A673 (cell line): ENCODE measurements at regions of chr1 and their contacts with region 1.

Region 1: GRCh38 chr1:48127735-48128685 is 94.5 kb upstream of the SLC5A9 start:
- DNase-seq: no peak
- H3K4me3 ChIP-seq: no peak overlapping the region
- H3K27ac ChIP-seq: no peak overlapping the region
- H3K4me1 ChIP-seq: no peaks in the 10 kb centered on the region
- H3K27me3 ChIP-seq: peaks cover 14% of the 10 kb centered on the region
- CTCF ChIP-seq: no peak

Region 2: GRCh38 chr1:48187969-48188563 is 60.1 kb after region 1 on chr1:
- CTCF ChIA-PET with region 1: no interaction called
- POLR2A ChIA-PET with region 1: no interaction called
- intact Hi-C with region 1: loop called (anchors 5 kb)
- DNase-seq: no peak
- H3K4me3 ChIP-seq: no peak overlapping the region
- H3K27ac ChIP-seq: no peak overlapping the region
- H3K4me1 ChIP-seq: no peaks in the 10 kb centered on the region
- H3K27me3 ChIP-seq: no peaks in the 10 kb centered on the region
- CTCF ChIP-seq: no peak

Region 3: DNA sequence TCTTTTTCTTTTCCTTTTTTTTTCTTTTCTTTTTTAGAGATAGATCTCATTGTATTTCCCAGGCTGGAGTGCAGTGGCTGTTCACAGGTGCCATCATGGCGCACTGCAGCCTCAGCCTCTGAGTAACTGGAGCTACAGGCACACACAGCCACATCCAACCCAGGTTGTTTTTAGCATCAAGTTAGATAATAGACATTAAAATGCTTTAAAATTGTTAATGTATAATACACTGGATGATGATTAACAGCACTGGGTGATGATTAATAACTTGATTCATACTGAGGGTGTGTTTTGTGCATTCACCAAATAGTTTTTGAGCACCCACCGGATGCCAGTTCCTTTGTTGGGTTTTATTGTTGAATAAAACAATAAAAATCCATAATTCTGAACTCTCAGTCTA is 573.4 kb after region 1 on chr1:
- CTCF ChIA-PET with region 1: no interaction called
- POLR2A ChIA-PET with region 1: no interaction called
- intact Hi-C with region 1: no loop called
- DNase-seq: no peak
- H3K4me3 ChIP-seq: no peak overlapping the region
- H3K27ac ChIP-seq: no peak overlapping the region
- H3K4me1 ChIP-seq: no peaks in the 10 kb centered on the region
- H3K27me3 ChIP-seq: no peaks in the 10 kb centered on the region
- CTCF ChIP-seq: no peak